Ascending aorta (tissue), 2 donors: ENCODE measurements at regions of chr5 and their contacts with region 1.

Region 1: DNA sequence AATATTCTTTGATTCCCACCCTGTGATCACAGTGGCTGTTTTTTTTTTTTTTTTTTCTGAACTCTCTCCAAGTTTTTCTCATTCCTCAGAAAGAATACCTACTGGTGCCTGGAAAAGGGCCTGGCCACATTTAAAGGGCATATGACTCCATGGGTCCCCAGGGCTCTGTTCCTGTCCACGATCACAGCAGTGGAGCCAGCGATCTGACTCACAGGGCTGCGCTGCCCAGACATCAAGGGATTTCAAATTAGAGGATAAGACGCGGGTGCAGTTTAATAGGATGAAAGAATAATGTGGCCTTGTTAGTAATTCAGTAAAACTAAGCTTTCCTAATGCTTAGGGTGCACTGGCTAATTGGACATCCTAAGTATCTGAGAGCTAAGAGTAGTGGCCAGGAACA is 175.1 kb upstream of the MSX2 start:
- DNase-seq: peak; percentile 34 to 91
- H3K4me3 ChIP-seq: no peak overlapping the region
- H3K27ac ChIP-seq: no peak overlapping the region
- H3K4me1 ChIP-seq: peaks cover 9 to 32% of the 10 kb centered on the region in 2 donors
- H3K27me3 ChIP-seq: no peaks in the 10 kb centered on the region
- CTCF ChIP-seq: no peak

Region 2: GRCh38 chr5:174348311-174348981 is 200.8 kb before region 1 on chr5:
- intact Hi-C with region 1: loop called (anchors 10 kb)
- DNase-seq: peak in 1 of 2 donors; percentile 74
- H3K4me3 ChIP-seq: no peak overlapping the region
- H3K27ac ChIP-seq: peak overlapping the region; percentile 69 to 81
- H3K4me1 ChIP-seq: peaks cover 0 to 8% of the 10 kb centered on the region in 2 donors
- H3K27me3 ChIP-seq: no peaks in the 10 kb centered on the region
- CTCF ChIP-seq: no peak

Region 3: DNA sequence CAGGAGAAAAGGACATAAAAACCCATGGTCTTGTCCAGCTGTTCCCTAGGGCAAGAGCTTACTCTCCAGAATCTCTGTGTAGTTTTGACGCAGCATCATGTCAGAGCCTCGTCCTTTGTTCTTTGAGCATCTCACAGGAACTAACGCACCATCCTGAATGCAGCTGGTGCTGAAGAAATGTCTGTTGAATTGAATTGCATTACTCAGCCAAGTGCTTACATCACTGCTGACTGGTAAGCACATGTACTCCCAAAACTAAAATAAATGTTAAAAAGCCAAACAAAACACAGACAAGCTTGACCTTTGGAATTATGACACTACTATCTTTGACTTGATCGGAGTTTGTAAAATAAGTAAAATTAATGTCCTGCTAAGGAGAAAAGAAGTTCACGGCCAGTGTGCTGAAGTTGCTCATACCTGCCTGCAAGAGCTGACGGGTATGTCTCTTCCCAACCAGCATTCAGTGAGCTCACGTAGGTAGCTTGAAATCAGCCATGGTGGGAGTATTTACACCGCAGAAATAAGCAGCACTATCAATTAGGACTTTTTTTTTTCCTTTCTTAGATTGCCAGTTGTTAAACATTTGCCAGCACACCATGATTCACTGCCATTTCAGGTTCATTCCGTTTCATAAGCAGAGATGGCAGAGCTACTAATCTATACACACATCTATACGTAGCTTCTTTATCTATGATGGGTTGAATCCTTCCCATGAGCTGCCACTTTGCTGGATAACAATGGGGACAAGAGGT is 135.5 kb before region 1 on chr5:
- intact Hi-C with region 1: loop called (anchors 5 kb)
- DNase-seq: no peak
- H3K4me3 ChIP-seq: no peak overlapping the region
- H3K27ac ChIP-seq: peak overlapping the region; percentile 63 to 66
- H3K4me1 ChIP-seq: peaks cover 0 to 13% of the 10 kb centered on the region in 2 donors
- H3K27me3 ChIP-seq: no peaks in the 10 kb centered on the region
- CTCF ChIP-seq: no peak

Region 4: GRCh38 chr5:174532455-174533453 is 16.5 kb before region 1 on chr5:
- intact Hi-C with region 1: loop called (anchors 1 kb)
- DNase-seq: peak; percentile 64 to 93
- H3K4me3 ChIP-seq: no peak overlapping the region
- H3K27ac ChIP-seq: peak overlapping the region; percentile 34 to 64
- H3K4me1 ChIP-seq: peaks cover 12 to 16% of the 10 kb centered on the region in 2 donors
- H3K27me3 ChIP-seq: no peaks in the 10 kb centered on the region
- CTCF ChIP-seq: no peak

Region 5: DNA sequence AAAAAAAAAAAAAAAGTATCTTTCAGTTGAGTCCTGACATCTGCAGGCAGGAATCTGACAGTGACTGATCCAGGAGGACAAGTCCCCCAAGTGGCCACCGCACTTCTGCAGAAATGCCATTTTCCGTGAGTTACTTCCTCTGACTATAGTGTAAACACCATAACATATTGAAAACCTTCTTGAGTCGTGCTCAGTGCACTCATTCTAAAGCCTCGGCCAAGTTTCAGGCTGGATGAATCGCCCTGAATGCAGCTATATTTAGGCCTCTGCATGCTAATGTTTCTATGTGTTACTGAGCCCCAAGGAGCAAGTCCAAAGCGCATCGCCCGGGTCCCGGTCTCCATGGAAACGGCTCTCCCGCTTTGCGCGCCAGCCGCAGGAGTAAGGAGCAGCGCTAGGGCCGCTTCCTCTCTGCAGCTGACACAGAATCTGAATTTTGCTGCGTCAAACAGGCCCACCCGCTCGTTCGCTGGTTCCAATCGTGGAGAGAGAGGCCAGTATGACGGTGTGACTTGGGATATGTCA is 510.5 kb after region 1 on chr5:
- intact Hi-C with region 1: no loop called
- DNase-seq: peak in 1 of 2 donors; percentile 78
- H3K4me3 ChIP-seq: peak overlapping the region; percentile 42 to 54
- H3K27ac ChIP-seq: peak overlapping the region; percentile 59 to 65
- H3K4me1 ChIP-seq: peaks cover 0 to 4% of the 10 kb centered on the region in 2 donors
- H3K27me3 ChIP-seq: no peaks in the 10 kb centered on the region
- CTCF ChIP-seq: no peak

Region 6: GRCh38 chr5:175214152-175214551 is 664.9 kb after region 1 on chr5:
- intact Hi-C with region 1: loop called (anchors 10 kb)
- DNase-seq: peak; percentile 54 to 92
- H3K4me3 ChIP-seq: no peak overlapping the region
- H3K27ac ChIP-seq: no peak overlapping the region
- H3K4me1 ChIP-seq: peaks cover 10 to 45% of the 10 kb centered on the region in 2 donors
- H3K27me3 ChIP-seq: no peaks in the 10 kb centered on the region
- CTCF ChIP-seq: no peak